H1 (cell line): ENCODE measurements at regions of chr1 and their contacts with region 1.

Region 1: GRCh38 chr1:154911691-154912550 is 24.6 kb downstream of the PMVK start:
- DNase-seq: no peak
- H3K4me3 ChIP-seq: no peak overlapping the region
- H3K27ac ChIP-seq: no peak overlapping the region
- H3K4me1 ChIP-seq: no peaks in the 10 kb centered on the region
- H3K27me3 ChIP-seq: no peaks in the 10 kb centered on the region
- CTCF ChIP-seq: no peak
- EP300 ChIP-seq: no peak
- POLR2A ChIP-seq: no peak
- RAD21 ChIP-seq: no peak

Region 2: DNA sequence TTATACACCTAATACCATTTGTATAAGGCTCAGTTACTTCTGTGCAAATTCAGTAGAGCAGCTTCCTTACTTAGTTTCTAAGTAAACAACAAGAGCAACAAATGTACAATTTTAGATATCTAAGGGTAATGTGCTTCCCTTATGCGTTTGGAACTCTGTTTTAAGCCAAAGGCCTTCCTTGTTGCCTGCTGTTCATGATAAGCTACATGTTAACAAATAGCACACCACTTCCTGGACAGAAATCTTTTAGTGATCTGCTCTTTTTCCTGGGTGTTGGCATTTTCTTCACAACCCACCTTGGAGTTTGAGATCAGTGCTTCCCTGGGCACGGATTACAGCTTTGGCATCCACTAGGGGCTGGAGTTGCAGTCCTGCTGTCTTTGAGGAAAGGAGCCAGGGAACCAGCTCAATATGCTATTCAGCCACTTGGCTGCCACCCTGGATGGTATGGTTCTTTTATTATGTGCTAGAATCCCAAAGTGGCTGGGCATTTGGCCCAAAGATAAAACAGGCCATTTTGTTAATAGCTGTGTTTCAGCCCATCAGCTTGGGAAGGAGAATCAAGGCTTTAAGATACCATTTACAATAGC is 248.4 kb before region 1 on chr1:
- CTCF ChIA-PET with region 1: no interaction called
- POLR2A ChIA-PET with region 1: no interaction called
- DNase-seq: no peak
- H3K4me3 ChIP-seq: no peak overlapping the region
- H3K27ac ChIP-seq: no peak overlapping the region
- H3K4me1 ChIP-seq: peaks cover 0 to 3% (median 0%) of the 10 kb centered on the region in 4 experiments; a peak in 1 of 7 replicates
- H3K27me3 ChIP-seq: no peaks in the 10 kb centered on the region
- CTCF ChIP-seq: peak in 1 of 3 experiments; percentile 18; a peak in 1 of 4 replicates
- EP300 ChIP-seq: no peak
- POLR2A ChIP-seq: no peak
- RAD21 ChIP-seq: no peak

Region 3: GRCh38 chr1:154922584-154922983 is 10.7 kb after region 1 on chr1:
- CTCF ChIA-PET with region 1: interaction called, 10 read pairs
- POLR2A ChIA-PET with region 1: interaction called, 6 read pairs
- DNase-seq: no peak
- H3K4me3 ChIP-seq: no peak overlapping the region
- H3K27ac ChIP-seq: no peak overlapping the region
- H3K4me1 ChIP-seq: no peaks in the 10 kb centered on the region
- H3K27me3 ChIP-seq: no peaks in the 10 kb centered on the region
- CTCF ChIP-seq: no peak
- EP300 ChIP-seq: no peak
- POLR2A ChIP-seq: no peak
- RAD21 ChIP-seq: no peak